GM10248 (cell line): ENCODE measurements at regions of chr9 and their contacts with region 1.

Region 1: GRCh38 chr9:116420993-116421538 is 266.0 kb upstream of the TRIM32 start:
- DNase-seq: no peak
- CTCF ChIP-seq: no peak

Region 2: GRCh38 chr9:116409638-116410037 is 11.4 kb before region 1 on chr9:
- CTCF ChIA-PET with region 1: interaction called, 19 read pairs
- POLR2A ChIA-PET with region 1: no interaction called
- DNase-seq: no peak
- CTCF ChIP-seq: no peak